ENCODE measurements at regions of chr2 and their contacts with region 1.

Region 1: GRCh38 chr2:216350214-216350789 is 22.0 kb downstream of the MARCHF4 start:
- DNase-seq: peak in 7 of 9 experiments; percentile 22 to 70 (median 58)
- ATAC-seq: peak; percentile 67
- H3K4me3 ChIP-seq: no peak overlapping the region
- H3K4me3 Mint-ChIP-seq: no peak overlapping the region
- H3K27ac ChIP-seq: peak overlapping the region in 1 of 2 experiments; percentile 74
- H3K27ac Mint-ChIP-seq: peak overlapping the region; percentile 78
- H3K4me1 ChIP-seq: peaks cover 80% of the 10 kb centered on the region
- H3K4me1 Mint-ChIP-seq: peaks cover 87% of the 10 kb centered on the region
- H3K27me3 ChIP-seq: no peaks in the 10 kb centered on the region
- H3K27me3 Mint-ChIP-seq: no peaks in the 10 kb centered on the region
- CTCF ChIP-seq: no peak

Region 2: GRCh38 chr2:215435280-215435808 is 915.0 kb before region 1 on chr2:
- CTCF ChIA-PET with region 1: no interaction called
- POLR2A ChIA-PET with region 1: no interaction called
- intact Hi-C with region 1: no loop called
- DNase-seq: peak in 2 of 9 experiments; percentile 6 to 11
- ATAC-seq: peak; percentile 29
- H3K4me3 ChIP-seq: peak overlapping the region; percentile 34 to 55
- H3K4me3 Mint-ChIP-seq: peak overlapping the region; percentile 78
- H3K27ac ChIP-seq: no peak overlapping the region
- H3K27ac Mint-ChIP-seq: no peak overlapping the region
- H3K4me1 ChIP-seq: peaks cover 14% of the 10 kb centered on the region
- H3K4me1 Mint-ChIP-seq: peaks cover 17% of the 10 kb centered on the region
- H3K27me3 ChIP-seq: peaks cover 25 to 30% of the 10 kb centered on the region in 2 experiments
- H3K27me3 Mint-ChIP-seq: peaks cover 73% of the 10 kb centered on the region
- CTCF ChIP-seq: no peak

Region 3: DNA sequence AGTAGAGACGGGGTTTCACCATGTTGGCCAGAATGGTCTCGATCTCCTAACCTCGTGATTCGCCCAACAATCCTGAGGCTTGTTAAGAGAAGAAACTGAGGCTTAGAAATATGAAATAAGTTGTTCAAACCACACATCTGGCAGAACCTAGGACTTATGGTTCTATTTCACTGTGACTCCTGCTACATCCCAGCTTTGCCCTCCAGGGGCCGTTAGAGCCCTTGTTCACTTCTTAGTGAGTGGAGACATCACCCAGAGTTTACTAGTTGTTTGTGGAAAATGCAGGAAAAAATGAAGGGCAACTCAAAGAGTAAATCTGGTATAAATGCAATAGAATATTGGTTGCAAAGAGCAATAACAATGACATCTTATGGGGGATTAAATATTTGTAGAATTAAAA is 22.0 kb before region 1 on chr2:
- CTCF ChIA-PET with region 1: interaction called, 11 read pairs
- POLR2A ChIA-PET with region 1: interaction called, 3 read pairs
- intact Hi-C with region 1: no loop called
- DNase-seq: peak in 2 of 9 experiments; percentile 44 to 50
- ATAC-seq: no peak
- H3K4me3 ChIP-seq: no peak overlapping the region
- H3K4me3 Mint-ChIP-seq: no peak overlapping the region
- H3K27ac ChIP-seq: no peak overlapping the region
- H3K27ac Mint-ChIP-seq: no peak overlapping the region
- H3K4me1 ChIP-seq: no peaks in the 10 kb centered on the region
- H3K4me1 Mint-ChIP-seq: peaks cover 2% of the 10 kb centered on the region
- H3K27me3 ChIP-seq: no peaks in the 10 kb centered on the region
- H3K27me3 Mint-ChIP-seq: no peaks in the 10 kb centered on the region
- CTCF ChIP-seq: no peak

Region 4: GRCh38 chr2:216371756-216372702 is 21.7 kb after region 1 on chr2 and contains the start of gene MARCHF4:
- CTCF ChIA-PET with region 1: interaction called, 3 read pairs
- POLR2A ChIA-PET with region 1: interaction called, 4 read pairs
- intact Hi-C with region 1: loop called in 1 of 2 experiments (anchors 1 kb)
- DNase-seq: peak; percentile 46 to 82 (median 73)
- ATAC-seq: peak; percentile 98
- H3K4me3 ChIP-seq: no peak within 1 kb of the TSS
- H3K4me3 Mint-ChIP-seq: peak within 1 kb of the TSS; percentile 16
- H3K27ac ChIP-seq: no peak within 1 kb of the TSS
- H3K27ac Mint-ChIP-seq: no peak within 1 kb of the TSS
- H3K4me1 ChIP-seq: peaks cover 16% of the 10 kb centered on the region
- H3K4me1 Mint-ChIP-seq: peaks cover 15% of the 10 kb centered on the region
- H3K27me3 ChIP-seq: peaks cover 20 to 23% of the 10 kb centered on the region in 2 experiments
- H3K27me3 Mint-ChIP-seq: peaks cover 49% of the 10 kb centered on the region
- CTCF ChIP-seq: no peak
- total RNA-seq, gene MARCHF4: not detected